Activated naive CD4-positive, alpha-beta T cell treated with anti-CD3 and anti-CD28 coated beads for 36 hours (primary cell): ENCODE measurements at regions of chr6 and their contacts with region 1.

Region 1: GRCh38 chr6:148746363-148747144 is at the start of gene UST:
- DNase-seq: peak; percentile 73
- H3K4me3 Mint-ChIP-seq: peak within 1 kb of the TSS; percentile 83
- H3K27ac Mint-ChIP-seq: peak within 1 kb of the TSS; percentile 25
- H3K4me1 Mint-ChIP-seq: peaks cover 13% of the 10 kb centered on the region
- H3K27me3 Mint-ChIP-seq: peaks cover 48% of the 10 kb centered on the region
- total RNA-seq, gene UST: 0.20 to 0.74 TPM

Region 2: GRCh38 chr6:147154454-147154853 is 1592.1 kb before region 1 on chr6:
- CTCF ChIA-PET with region 1: no interaction called
- intact Hi-C with region 1: no loop called
- DNase-seq: no peak
- H3K4me3 Mint-ChIP-seq: no peak overlapping the region
- H3K27ac Mint-ChIP-seq: no peak overlapping the region
- H3K4me1 Mint-ChIP-seq: peaks cover 5% of the 10 kb centered on the region
- H3K27me3 Mint-ChIP-seq: no peaks in the 10 kb centered on the region

Region 3: GRCh38 chr6:148487461-148487860 is 259.1 kb before region 1 on chr6:
- CTCF ChIA-PET with region 1: no interaction called
- intact Hi-C with region 1: no loop called
- DNase-seq: no peak
- H3K4me3 Mint-ChIP-seq: no peak overlapping the region
- H3K27ac Mint-ChIP-seq: no peak overlapping the region
- H3K4me1 Mint-ChIP-seq: no peaks in the 10 kb centered on the region
- H3K27me3 Mint-ChIP-seq: peaks cover 6% of the 10 kb centered on the region

Region 4: GRCh38 chr6:148578245-148578732 is 168.3 kb before region 1 on chr6:
- CTCF ChIA-PET with region 1: no interaction called
- intact Hi-C with region 1: loop called (anchors 2 kb)
- DNase-seq: peak; percentile 68
- H3K4me3 Mint-ChIP-seq: no peak overlapping the region
- H3K27ac Mint-ChIP-seq: no peak overlapping the region
- H3K4me1 Mint-ChIP-seq: no peaks in the 10 kb centered on the region
- H3K27me3 Mint-ChIP-seq: peaks cover 24% of the 10 kb centered on the region

Region 5: DNA sequence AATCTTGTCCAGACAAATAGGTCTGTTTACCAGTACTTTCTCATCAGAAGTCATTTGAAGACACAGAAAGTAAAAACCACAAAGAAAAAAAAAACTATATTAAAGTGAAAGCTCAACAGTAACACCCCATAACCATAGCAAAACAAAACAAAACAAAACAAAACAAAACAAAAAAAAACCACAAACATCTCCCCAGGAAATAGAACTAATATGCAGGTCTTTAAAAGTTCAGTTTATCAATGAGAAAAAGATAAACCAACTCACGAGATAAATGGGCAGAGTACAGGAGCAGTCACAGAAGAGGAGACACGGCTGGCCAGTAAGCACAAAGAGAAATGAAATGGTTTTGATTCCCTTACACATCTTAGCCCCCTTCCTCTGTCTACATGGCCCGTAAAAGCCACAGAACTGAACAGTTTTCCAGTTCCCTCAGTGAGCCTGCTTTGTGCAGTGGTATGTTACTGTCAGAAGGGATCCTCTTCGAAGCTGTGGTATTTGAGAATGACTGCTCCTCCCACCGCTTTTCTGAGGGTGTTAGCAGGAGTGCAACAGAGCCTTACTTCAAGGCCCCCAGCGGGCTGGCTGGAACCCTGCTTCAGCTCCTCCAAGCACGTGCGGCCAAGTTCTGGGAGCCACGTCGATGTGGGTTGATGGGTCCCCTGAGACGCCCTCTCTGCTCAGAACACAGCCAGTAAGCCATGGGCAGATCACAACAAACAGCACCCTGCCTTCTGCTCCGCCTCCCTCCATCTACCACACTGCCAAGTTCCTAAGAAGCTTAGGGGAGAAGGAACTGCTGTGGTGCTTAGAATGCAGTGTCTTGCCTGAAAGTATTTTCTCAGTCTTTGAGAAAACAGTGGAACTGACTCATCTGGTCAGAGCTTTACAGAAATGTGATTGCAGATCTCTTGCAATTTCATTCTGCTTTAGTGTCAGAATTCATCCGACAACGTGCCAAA is 14.3 kb after region 1 on chr6:
- CTCF ChIA-PET with region 1: interaction called, 3 read pairs
- intact Hi-C with region 1: loop called (anchors 2 kb)
- DNase-seq: peak; percentile 41
- H3K4me3 Mint-ChIP-seq: peak overlapping the region; percentile 30
- H3K27ac Mint-ChIP-seq: peak overlapping the region; percentile 65
- H3K4me1 Mint-ChIP-seq: peaks cover 37% of the 10 kb centered on the region
- H3K27me3 Mint-ChIP-seq: peaks cover 37% of the 10 kb centered on the region

Region 6: DNA sequence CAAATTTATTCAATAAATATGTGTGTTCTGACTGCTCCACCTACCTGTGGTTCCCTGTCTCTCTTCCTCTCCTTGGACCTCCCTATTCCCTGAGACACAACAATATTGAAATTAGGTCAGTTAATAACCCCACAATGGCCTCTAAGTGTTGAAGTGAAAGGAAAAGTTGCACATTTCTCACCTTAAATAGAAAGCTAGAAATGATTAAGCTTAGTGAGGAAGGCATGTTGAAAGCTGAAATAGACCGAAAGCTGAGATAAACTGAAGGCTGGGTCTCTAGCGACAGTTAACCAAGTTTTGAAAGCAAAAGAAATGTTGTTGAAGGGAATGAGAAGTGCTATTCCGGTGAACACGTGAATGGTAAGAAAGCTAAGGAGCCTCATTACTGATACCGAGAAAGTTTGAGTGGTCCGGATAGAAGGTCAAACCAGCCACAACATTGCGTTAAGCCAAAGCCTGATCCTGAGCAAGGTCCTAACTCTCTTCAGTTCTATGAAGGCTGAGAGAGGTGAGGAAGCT is 34.4 kb after region 1 on chr6:
- CTCF ChIA-PET with region 1: interaction called, 4 read pairs
- intact Hi-C with region 1: loop called (anchors 2 kb)
- DNase-seq: no peak
- H3K4me3 Mint-ChIP-seq: no peak overlapping the region
- H3K27ac Mint-ChIP-seq: peak overlapping the region; percentile 39
- H3K4me1 Mint-ChIP-seq: peaks cover 8% of the 10 kb centered on the region
- H3K27me3 Mint-ChIP-seq: peaks cover 5% of the 10 kb centered on the region

Region 7: DNA sequence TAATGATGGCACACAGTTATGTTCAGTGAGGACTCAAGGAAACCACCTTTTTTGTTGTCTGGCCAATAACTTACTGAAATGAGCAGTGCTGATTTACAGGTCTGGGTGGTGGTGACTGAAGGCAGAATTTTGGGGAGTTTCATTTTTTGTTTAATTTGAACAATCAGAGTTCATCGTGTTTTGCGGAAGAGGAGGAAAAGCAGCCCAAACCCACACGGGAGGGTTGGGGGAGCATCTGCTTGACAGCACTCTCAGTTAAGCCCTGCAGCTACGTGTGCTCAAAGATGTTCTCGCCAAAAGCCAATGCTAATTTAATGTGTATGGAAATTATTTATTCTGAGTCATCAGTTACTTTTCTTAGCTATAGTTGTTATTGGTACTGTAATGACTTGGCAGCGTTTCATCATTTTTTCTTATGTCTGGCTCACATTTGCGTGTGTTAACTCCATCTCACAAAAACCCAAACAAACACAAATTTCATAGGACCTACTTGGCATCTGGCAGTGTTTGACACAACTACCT is 89.4 kb after region 1 on chr6:
- CTCF ChIA-PET with region 1: no interaction called
- intact Hi-C with region 1: loop called (anchors 2 kb)
- DNase-seq: peak; percentile 23
- H3K4me3 Mint-ChIP-seq: peak overlapping the region; percentile 5
- H3K27ac Mint-ChIP-seq: no peak overlapping the region
- H3K4me1 Mint-ChIP-seq: peaks cover 17% of the 10 kb centered on the region
- H3K27me3 Mint-ChIP-seq: peaks cover 14% of the 10 kb centered on the region

Region 8: GRCh38 chr6:148947621-148948444 is 201.3 kb after region 1 on chr6:
- CTCF ChIA-PET with region 1: no interaction called
- intact Hi-C with region 1: loop called (anchors 1 kb)
- DNase-seq: peak; percentile 89
- H3K4me3 Mint-ChIP-seq: no peak overlapping the region
- H3K27ac Mint-ChIP-seq: no peak overlapping the region
- H3K4me1 Mint-ChIP-seq: no peaks in the 10 kb centered on the region
- H3K27me3 Mint-ChIP-seq: peaks cover 2% of the 10 kb centered on the region